ENCODE measurements at regions of chr5 and their contacts with region 1.

Region 1: GRCh38 chr5:74648835-74649293 is 8.3 kb upstream of the ENC1 start:
- DNase-seq: peak in 1 of 5 donors; percentile 31
- H3K4me3 ChIP-seq: no peak overlapping the region
- H3K27ac ChIP-seq: no peak overlapping the region
- H3K4me1 ChIP-seq: no peaks in the 10 kb centered on the region
- H3K27me3 ChIP-seq: no peaks in the 10 kb centered on the region
- CTCF ChIP-seq: peak; percentile 58 to 78 (median 67)
- EP300 ChIP-seq: no peak
- POLR2A ChIP-seq: no peak

Region 2: DNA sequence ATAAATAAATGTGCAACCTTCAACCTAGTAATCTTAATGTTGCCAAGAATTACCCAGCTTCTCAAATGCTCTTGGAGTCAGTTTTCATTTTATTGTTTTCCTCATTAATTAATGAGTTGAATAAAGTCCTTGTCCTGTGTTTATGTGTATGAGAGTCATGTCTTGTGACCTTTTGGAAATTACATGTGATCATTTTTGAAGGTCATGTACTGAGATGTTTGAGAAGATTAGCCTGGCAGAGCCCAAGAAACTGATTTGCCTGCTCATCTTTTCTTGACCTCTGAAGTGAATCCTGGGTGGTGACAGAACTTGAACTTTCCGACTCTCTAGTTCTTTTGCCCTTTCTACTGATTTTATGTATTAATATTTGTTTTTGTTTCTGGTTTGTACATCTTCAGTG is 1098.8 kb before region 1 on chr5:
- intact Hi-C with region 1: loop called in 1 of 4 experiments (anchors 5 kb)
- DNase-seq: no peak
- H3K4me3 ChIP-seq: no peak overlapping the region
- H3K27ac ChIP-seq: no peak overlapping the region
- H3K4me1 ChIP-seq: no peaks in the 10 kb centered on the region
- H3K27me3 ChIP-seq: no peaks in the 10 kb centered on the region
- CTCF ChIP-seq: no peak
- EP300 ChIP-seq: no peak
- POLR2A ChIP-seq: no peak

Region 3: GRCh38 chr5:73902327-73903051 is 746.4 kb before region 1 on chr5:
- intact Hi-C with region 1: loop called (anchors 2 to 5 kb)
- DNase-seq: peak in 1 of 5 donors; percentile 39
- H3K4me3 ChIP-seq: no peak overlapping the region
- H3K27ac ChIP-seq: no peak overlapping the region
- H3K4me1 ChIP-seq: no peaks in the 10 kb centered on the region
- H3K27me3 ChIP-seq: no peaks in the 10 kb centered on the region
- CTCF ChIP-seq: peak; percentile 70 to 93 (median 92)
- EP300 ChIP-seq: no peak
- POLR2A ChIP-seq: no peak

Region 4: DNA sequence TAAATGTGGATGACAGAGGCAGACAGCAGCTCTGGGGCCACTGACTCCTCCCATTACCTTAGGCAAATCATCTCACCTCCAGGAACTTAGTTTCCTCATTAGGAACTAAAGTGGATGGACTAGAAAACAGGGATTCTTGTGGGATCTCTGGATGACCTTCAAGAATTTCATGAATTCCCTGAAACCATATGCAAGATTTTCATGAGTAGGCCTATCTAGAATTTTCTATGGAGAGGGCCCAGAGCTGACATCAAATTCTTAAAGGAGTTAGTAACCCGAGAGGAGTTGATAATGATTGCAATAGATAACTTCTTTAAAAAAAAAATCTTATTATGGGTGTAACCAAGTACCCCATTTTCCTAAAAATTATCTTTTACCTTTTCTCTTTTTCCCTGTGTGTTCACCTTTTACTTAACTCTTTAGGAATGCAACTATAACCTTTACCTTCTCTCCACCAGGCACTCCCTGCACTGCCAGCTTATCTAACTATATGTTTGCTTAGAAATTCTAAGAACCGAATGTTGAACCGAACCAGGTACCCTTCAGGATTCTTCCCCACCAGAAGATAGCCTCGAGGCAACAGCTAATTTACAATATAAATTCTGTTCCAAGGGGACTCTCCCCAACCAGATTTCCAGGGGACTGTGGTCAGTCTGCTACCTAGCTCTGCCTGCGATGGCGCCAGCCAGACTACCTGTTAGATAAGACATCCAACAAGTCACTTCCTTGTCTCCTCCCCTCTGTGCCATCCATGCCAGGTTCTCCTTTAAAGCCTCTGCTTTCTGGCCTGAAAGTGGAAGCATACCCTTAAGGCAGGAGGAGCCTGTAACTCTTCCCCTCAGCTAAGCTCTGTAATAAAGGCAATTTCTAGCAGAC is 317.5 kb after region 1 on chr5:
- intact Hi-C with region 1: no loop called
- DNase-seq: no peak
- H3K4me3 ChIP-seq: no peak overlapping the region
- H3K27ac ChIP-seq: no peak overlapping the region
- H3K4me1 ChIP-seq: no peaks in the 10 kb centered on the region
- H3K27me3 ChIP-seq: no peaks in the 10 kb centered on the region
- CTCF ChIP-seq: no peak
- EP300 ChIP-seq: no peak
- POLR2A ChIP-seq: no peak

Region 5: DNA sequence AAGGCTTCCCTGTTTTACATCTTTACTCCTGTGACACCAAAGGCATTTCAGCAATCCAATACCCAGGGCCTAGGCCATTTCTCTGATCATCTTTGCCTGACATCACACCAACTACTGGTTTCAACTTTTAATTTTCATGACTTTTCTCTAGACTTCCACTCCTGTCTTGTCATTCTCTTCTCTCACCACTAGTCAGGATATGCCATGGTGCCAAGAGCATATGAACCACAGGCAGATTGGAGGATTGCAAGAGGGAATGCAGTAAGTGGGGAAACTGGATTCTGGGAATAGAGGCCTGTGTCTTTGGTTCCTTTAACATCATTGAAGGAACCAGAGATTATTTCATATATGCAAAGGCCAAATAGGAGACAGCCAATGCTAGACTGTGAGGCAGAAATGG is 518.5 kb after region 1 on chr5:
- intact Hi-C with region 1: no loop called
- DNase-seq: no peak
- H3K4me3 ChIP-seq: no peak overlapping the region
- H3K27ac ChIP-seq: no peak overlapping the region
- H3K4me1 ChIP-seq: peaks cover 2% of the 10 kb centered on the region
- H3K27me3 ChIP-seq: no peaks in the 10 kb centered on the region
- CTCF ChIP-seq: no peak
- EP300 ChIP-seq: no peak
- POLR2A ChIP-seq: no peak

Measured in ovary (tissue), 10 donors.